Pancreas (tissue), 10 donors: ENCODE measurements at regions of chr10 and their contacts with region 1.

Region 1: GRCh38 chr10:31952066-31952465 is 23.4 kb upstream of the ARHGAP12 start:
- DNase-seq: no peak
- ATAC-seq: no peak
- H3K4me3 ChIP-seq: no peak overlapping the region
- H3K27ac ChIP-seq: no peak overlapping the region
- H3K4me1 ChIP-seq: peaks cover 5 to 13% (median 8%) of the 10 kb centered on the region in 3 donors
- H3K27me3 ChIP-seq: no peaks in the 10 kb centered on the region
- CTCF ChIP-seq: no peak

Region 2: GRCh38 chr10:31554556-31554955 is 397.5 kb before region 1 on chr10:
- intact Hi-C with region 1: no loop called
- DNase-seq: no peak
- ATAC-seq: no peak
- H3K4me3 ChIP-seq: no peak overlapping the region
- H3K27ac ChIP-seq: no peak overlapping the region
- H3K4me1 ChIP-seq: no peaks in the 10 kb centered on the region
- H3K27me3 ChIP-seq: no peaks in the 10 kb centered on the region
- CTCF ChIP-seq: no peak

Region 3: GRCh38 chr10:31864834-31865518 is 87.1 kb before region 1 on chr10:
- intact Hi-C with region 1: loop called in 1 of 3 experiments (anchors 5 kb)
- DNase-seq: no peak
- ATAC-seq: peak; percentile 23 to 65 (median 62)
- H3K4me3 ChIP-seq: no peak overlapping the region
- H3K27ac ChIP-seq: peak overlapping the region in 2 of 4 donors; percentile 22 to 57
- H3K4me1 ChIP-seq: peaks cover 11 to 31% (median 18%) of the 10 kb centered on the region in 3 donors
- H3K27me3 ChIP-seq: no peaks in the 10 kb centered on the region
- CTCF ChIP-seq: no peak

Region 4: DNA sequence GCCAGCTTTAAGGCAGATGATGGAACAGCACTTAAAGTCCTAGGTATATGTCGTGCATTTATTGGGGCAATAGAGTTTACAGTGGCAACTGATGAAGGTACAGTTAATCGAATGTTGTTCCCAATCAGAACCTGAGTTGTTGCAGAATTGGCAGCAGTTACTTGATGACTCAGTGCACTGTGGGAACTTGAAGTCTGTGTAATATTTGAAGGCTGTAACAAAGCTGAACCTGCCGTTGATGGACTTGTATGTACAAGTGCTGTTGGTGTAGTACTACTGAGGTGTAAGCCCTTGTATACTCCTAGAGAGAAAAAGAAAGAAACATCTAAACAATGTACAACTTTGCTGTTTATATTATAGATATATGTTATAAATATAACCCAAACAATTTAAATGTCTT is 319.6 kb after region 1 on chr10:
- intact Hi-C with region 1: no loop called
- DNase-seq: peak in 2 of 6 donors; percentile 18 to 53
- ATAC-seq: peak; percentile 66 to 92 (median 82)
- H3K4me3 ChIP-seq: no peak overlapping the region
- H3K27ac ChIP-seq: no peak overlapping the region
- H3K4me1 ChIP-seq: peaks cover 5 to 11% (median 5%) of the 10 kb centered on the region in 3 donors
- H3K27me3 ChIP-seq: no peaks in the 10 kb centered on the region
- CTCF ChIP-seq: no peak